ENCODE measurements at regions of chr6 and their contacts with region 1.

Region 1: GRCh38 chr6:108558372-108559096 is 2.2 kb upstream of the FOXO3 start:
- DNase-seq: peak; percentile 83

Region 2: GRCh38 chr6:108677357-108677756 is 118.8 kb after region 1 on chr6:
- CTCF ChIA-PET with region 1: no interaction called
- POLR2A ChIA-PET with region 1: interaction called, 11 read pairs
- DNase-seq: no peak

Region 3: GRCh38 chr6:108746366-108746765 is 187.8 kb after region 1 on chr6:
- CTCF ChIA-PET with region 1: no interaction called
- POLR2A ChIA-PET with region 1: interaction called, 11 read pairs
- DNase-seq: no peak